Caco-2 (cell line): ENCODE measurements at regions of chr2 and their contacts with region 1.

Region 1: DNA sequence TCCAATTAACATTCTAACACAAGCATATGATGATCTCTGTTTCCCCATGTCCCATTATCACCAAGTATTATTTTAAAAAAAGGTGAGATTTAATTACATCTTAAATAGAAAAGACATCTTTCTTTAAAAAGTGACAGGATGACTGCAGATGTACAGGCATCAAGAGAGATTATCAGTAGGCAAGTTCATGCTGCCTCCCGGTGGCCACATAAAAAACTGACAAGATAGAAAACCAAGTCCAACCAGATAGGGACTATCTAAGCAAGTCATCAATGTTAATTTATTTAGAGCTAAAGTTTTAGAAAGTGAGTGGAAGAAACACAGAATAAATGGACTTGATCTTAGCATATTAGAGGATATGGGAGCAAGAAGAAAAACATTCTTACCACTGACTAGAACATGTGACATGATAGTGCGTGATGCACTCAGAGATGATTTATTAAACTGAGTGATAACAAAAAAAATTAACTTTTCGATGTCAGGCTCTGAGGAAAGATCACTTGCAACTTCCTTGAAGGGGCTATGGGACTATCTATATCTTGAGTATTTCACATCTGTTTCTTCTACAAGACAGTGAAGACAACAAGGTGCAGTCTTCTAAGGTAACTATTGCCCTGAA is 5.4 kb upstream of the TDRD15 start:
- DNase-seq: peak; percentile 60 to 66
- H3K4me3 ChIP-seq: no peak overlapping the region
- H3K4me3 Mint-ChIP-seq: no peak overlapping the region
- H3K27ac Mint-ChIP-seq: no peak overlapping the region
- H3K4me1 ChIP-seq: no peaks in the 10 kb centered on the region
- H3K4me1 Mint-ChIP-seq: peaks cover 6% of the 10 kb centered on the region
- H3K27me3 ChIP-seq: no peaks in the 10 kb centered on the region
- H3K27me3 Mint-ChIP-seq: no peaks in the 10 kb centered on the region
- CTCF ChIP-seq: peak; percentile 72 to 74

Region 2: GRCh38 chr2:20781656-20782265 is 336.6 kb before region 1 on chr2:
- CTCF ChIA-PET with region 1: no interaction called
- POLR2A ChIA-PET with region 1: no interaction called
- intact Hi-C with region 1: loop called (anchors 5 kb)
- DNase-seq: peak in 1 of 2 experiments; percentile 43
- H3K4me3 ChIP-seq: no peak overlapping the region
- H3K4me3 Mint-ChIP-seq: no peak overlapping the region
- H3K27ac Mint-ChIP-seq: no peak overlapping the region
- H3K4me1 ChIP-seq: peaks cover 7% of the 10 kb centered on the region; the same call in 1 of the 2 replicates
- H3K4me1 Mint-ChIP-seq: peaks cover 15% of the 10 kb centered on the region
- H3K27me3 ChIP-seq: no peaks in the 10 kb centered on the region
- H3K27me3 Mint-ChIP-seq: no peaks in the 10 kb centered on the region
- CTCF ChIP-seq: peak; percentile 57 to 75

Region 3: GRCh38 chr2:20962939-20963557 is 155.4 kb before region 1 on chr2:
- CTCF ChIA-PET with region 1: no interaction called
- POLR2A ChIA-PET with region 1: no interaction called
- intact Hi-C with region 1: loop called (anchors 1 kb)
- DNase-seq: peak; percentile 73 to 80
- H3K4me3 ChIP-seq: no peak overlapping the region
- H3K4me3 Mint-ChIP-seq: no peak overlapping the region
- H3K27ac Mint-ChIP-seq: no peak overlapping the region
- H3K4me1 ChIP-seq: no peaks in the 10 kb centered on the region
- H3K4me1 Mint-ChIP-seq: no peaks in the 10 kb centered on the region
- H3K27me3 ChIP-seq: no peaks in the 10 kb centered on the region; the same call in 1 of the 2 replicates
- H3K27me3 Mint-ChIP-seq: peaks cover 5% of the 10 kb centered on the region
- CTCF ChIP-seq: peak; percentile 83 to 90

Region 4: GRCh38 chr2:20992201-20992711 is 126.2 kb before region 1 on chr2:
- CTCF ChIA-PET with region 1: no interaction called
- POLR2A ChIA-PET with region 1: no interaction called
- intact Hi-C with region 1: loop called (anchors 5 kb)
- DNase-seq: peak in 1 of 2 experiments; percentile 12
- H3K4me3 ChIP-seq: no peak overlapping the region
- H3K4me3 Mint-ChIP-seq: no peak overlapping the region
- H3K27ac Mint-ChIP-seq: no peak overlapping the region
- H3K4me1 ChIP-seq: no peaks in the 10 kb centered on the region
- H3K4me1 Mint-ChIP-seq: no peaks in the 10 kb centered on the region
- H3K27me3 ChIP-seq: no peaks in the 10 kb centered on the region
- H3K27me3 Mint-ChIP-seq: no peaks in the 10 kb centered on the region
- CTCF ChIP-seq: no peak

Region 5: DNA sequence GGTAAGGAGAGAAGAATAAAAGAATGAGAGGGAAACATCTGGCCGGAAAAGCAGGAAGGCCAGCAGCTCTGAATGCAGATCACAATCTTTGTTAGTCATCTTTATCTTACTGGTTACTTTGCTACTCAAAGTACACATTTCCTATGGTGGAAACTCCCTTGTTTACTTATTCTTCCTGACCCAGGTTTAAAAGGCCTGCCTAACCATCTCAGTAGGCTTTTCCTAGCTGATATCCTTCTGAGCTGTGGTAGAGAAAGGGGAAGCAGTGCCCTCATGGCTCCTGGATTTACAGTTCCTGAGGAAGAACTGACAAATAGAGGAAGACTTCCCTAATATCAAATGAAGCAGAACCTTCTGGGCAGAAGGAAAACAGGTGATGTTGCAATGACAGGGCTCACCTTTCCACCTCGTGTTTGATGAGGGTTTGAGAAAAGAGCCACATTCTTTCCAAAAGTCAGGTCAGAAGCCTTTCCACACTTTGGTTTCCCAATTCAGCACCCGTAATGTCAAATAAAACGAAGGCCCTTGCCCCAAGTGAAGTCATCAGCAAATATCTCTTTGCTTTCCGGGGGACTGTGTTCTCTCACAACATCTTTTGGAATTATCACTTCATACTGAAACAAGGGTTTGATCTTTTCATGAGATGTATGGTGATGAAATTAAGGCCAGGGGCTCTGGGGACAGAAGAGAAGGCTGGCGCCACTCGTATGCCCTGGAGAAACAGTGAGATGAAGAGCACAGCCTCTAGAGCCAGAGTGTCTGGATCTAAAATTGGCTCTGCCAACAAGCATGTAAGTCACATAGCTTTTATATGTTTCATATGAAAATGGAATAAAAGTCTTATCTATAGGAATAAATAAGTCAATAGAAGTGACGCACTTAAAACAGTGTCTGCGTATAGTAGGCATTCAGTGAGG is 47.8 kb before region 1 on chr2:
- CTCF ChIA-PET with region 1: no interaction called
- POLR2A ChIA-PET with region 1: no interaction called
- intact Hi-C with region 1: loop called (anchors 1 kb)
- DNase-seq: peak in 1 of 2 experiments; percentile 50
- H3K4me3 ChIP-seq: no peak overlapping the region
- H3K4me3 Mint-ChIP-seq: peak overlapping the region; percentile 7
- H3K27ac Mint-ChIP-seq: peak overlapping the region; percentile 32
- H3K4me1 ChIP-seq: peaks cover 20% of the 10 kb centered on the region
- H3K4me1 Mint-ChIP-seq: peaks cover 27% of the 10 kb centered on the region
- H3K27me3 ChIP-seq: no peaks in the 10 kb centered on the region
- H3K27me3 Mint-ChIP-seq: no peaks in the 10 kb centered on the region
- CTCF ChIP-seq: no peak

Region 6: GRCh38 chr2:21165350-21165749 is 46.9 kb after region 1 on chr2:
- CTCF ChIA-PET with region 1: no interaction called
- POLR2A ChIA-PET with region 1: no interaction called
- intact Hi-C with region 1: loop called (anchors 1 kb)
- DNase-seq: no peak
- H3K4me3 ChIP-seq: no peak overlapping the region
- H3K4me3 Mint-ChIP-seq: no peak overlapping the region
- H3K27ac Mint-ChIP-seq: no peak overlapping the region
- H3K4me1 ChIP-seq: no peaks in the 10 kb centered on the region
- H3K4me1 Mint-ChIP-seq: no peaks in the 10 kb centered on the region
- H3K27me3 ChIP-seq: no peaks in the 10 kb centered on the region
- H3K27me3 Mint-ChIP-seq: no peaks in the 10 kb centered on the region
- CTCF ChIP-seq: peak; percentile 41 to 50

Region 7: GRCh38 chr2:21346984-21347383 is 228.6 kb after region 1 on chr2:
- CTCF ChIA-PET with region 1: no interaction called
- POLR2A ChIA-PET with region 1: no interaction called
- intact Hi-C with region 1: no loop called
- DNase-seq: no peak
- H3K4me3 ChIP-seq: no peak overlapping the region
- H3K4me3 Mint-ChIP-seq: no peak overlapping the region
- H3K27ac Mint-ChIP-seq: no peak overlapping the region
- H3K4me1 ChIP-seq: no peaks in the 10 kb centered on the region
- H3K4me1 Mint-ChIP-seq: no peaks in the 10 kb centered on the region
- H3K27me3 ChIP-seq: no peaks in the 10 kb centered on the region
- H3K27me3 Mint-ChIP-seq: peaks cover 3% of the 10 kb centered on the region
- CTCF ChIP-seq: no peak